Common myeloid progenitor, CD34-positive (primary cell): ENCODE measurements at regions of chr17 and their contacts with region 1.

Region 1: DNA sequence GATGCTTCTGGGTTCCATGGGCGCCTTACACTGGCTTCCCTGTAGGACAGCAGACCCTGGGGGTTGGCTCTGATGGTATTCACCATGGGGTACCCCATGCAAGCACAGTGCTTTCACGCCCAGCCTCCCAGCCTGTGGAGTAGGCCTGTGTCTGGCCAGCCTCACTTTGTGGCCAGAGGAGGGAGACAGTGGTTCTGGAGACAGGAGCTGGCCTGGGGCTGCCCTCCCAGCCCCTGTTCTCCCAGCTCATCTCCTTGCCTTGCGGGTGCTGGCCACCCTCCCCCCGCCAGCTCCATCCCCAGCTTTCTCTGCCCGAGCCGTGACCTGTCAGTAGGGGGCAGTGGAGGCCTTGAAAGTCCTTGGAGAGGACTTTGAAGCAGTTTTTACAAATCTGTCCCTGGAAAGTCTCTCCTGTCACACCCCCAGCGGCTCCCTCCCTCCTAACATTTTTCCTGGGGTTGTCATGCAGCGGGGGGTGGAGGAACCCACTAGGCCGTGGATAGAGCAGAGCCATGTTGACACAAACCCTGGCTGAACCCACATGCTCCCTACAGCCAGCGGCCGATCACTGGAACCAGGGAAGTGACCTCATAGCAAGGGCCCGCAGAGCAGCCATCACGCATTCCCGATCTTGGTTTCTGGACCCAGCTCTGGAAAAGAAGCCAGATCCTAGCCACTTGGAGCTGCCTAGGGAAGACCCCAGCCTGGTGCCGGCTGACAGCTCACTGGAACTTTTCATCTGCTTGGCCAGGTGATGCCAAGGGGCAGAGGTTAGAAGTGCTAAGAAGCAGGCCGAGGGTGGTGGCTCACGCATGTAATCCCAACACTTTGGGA is 289.4 kb downstream of the SEC14L1 start:
- DNase-seq: peak; percentile 65 to 73 (median 68)
- H3K4me3 ChIP-seq: peak overlapping the region in 1 of 7 experiments; percentile 6
- H3K27ac ChIP-seq: no peak overlapping the region
- H3K4me1 ChIP-seq: peaks cover 4 to 99% (median 77%) of the 10 kb centered on the region in 4 experiments
- H3K27me3 ChIP-seq: no peaks in the 10 kb centered on the region

Region 2: DNA sequence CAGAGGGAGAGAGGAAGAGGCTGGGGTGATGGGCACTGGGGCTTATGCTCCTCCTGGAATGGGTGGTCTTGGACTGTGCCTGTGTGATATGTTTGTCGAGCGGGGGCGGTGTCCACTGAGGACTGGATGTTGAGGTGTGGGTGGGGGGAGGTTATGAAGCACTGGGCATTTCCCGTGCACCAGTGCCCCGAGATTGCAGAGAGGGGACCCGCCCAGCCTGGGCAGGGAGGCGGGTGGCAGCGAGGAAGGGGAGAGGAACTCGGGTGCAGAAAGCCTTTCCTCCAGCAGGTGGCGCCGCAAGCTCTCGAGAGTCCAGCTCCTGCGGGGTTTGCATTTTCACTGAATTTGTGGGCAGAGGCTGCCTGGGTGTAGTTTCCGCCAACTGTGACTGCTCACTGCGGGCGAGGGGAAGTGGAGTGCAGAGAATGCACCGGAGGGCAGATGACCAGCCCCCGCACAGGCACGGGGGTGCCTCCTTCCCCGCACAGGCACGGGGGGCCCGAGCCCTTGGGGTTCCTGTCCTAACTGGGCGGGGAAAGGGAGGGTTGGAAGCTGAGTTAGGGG is 98.8 kb before region 1 on chr17:
- CTCF ChIA-PET with region 1: interaction called, 36 read pairs
- POLR2A ChIA-PET with region 1: no interaction called
- DNase-seq: peak; percentile 88 to 95 (median 94)
- H3K4me3 ChIP-seq: peak overlapping the region in 5 of 7 experiments; percentile 27 to 69 (median 54)
- H3K27ac ChIP-seq: no peak overlapping the region
- H3K4me1 ChIP-seq: peaks cover 3 to 57% (median 23%) of the 10 kb centered on the region in 4 experiments
- H3K27me3 ChIP-seq: no peaks in the 10 kb centered on the region

Region 3: DNA sequence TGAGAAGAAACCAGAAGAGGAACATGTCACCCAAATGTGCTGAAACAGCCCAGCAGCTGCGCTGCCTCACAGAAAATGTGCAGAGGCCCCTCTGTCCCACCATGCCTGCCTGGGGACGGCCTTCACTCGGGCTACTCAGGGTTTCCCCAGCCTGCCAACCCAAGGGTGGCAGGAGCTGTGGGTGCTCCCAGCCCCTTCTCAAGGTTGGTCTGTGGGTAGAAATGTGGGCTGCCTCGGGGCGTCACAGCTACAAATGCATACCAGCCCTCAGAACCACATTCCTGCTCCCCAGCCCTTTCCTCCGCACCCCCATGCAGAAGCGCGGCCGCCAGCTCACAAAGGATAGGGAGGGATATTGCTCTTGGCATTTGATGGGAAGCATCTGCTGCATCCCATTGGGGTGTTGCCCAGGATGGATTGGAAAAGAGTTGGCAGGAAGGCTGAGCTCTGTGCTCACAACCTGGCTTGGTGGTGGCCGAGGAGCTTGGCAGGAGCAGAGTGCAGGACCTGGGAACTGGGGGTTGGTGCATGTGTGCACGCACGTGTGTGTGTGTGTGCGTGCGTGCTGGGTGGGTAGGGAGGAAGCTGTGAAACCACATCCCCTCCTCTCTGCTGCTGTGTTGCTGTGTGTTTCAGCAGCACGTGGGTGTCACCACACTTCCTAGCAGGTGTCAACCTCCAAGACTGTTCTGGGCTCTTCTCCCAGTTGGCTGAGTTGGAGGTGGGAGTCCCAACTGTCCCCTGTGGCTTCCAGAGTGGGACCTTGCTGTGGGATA is 15.0 kb after region 1 on chr17:
- CTCF ChIA-PET with region 1: interaction called, 46 read pairs
- POLR2A ChIA-PET with region 1: interaction called, 6 read pairs
- DNase-seq: peak; percentile 96 to 99 (median 98)
- H3K4me3 ChIP-seq: peak overlapping the region in 5 of 7 experiments; percentile 9 to 49 (median 48)
- H3K27ac ChIP-seq: peak overlapping the region; percentile 46 to 84
- H3K4me1 ChIP-seq: peaks cover 30 to 87% (median 78%) of the 10 kb centered on the region in 4 experiments
- H3K27me3 ChIP-seq: no peaks in the 10 kb centered on the region

Region 4: DNA sequence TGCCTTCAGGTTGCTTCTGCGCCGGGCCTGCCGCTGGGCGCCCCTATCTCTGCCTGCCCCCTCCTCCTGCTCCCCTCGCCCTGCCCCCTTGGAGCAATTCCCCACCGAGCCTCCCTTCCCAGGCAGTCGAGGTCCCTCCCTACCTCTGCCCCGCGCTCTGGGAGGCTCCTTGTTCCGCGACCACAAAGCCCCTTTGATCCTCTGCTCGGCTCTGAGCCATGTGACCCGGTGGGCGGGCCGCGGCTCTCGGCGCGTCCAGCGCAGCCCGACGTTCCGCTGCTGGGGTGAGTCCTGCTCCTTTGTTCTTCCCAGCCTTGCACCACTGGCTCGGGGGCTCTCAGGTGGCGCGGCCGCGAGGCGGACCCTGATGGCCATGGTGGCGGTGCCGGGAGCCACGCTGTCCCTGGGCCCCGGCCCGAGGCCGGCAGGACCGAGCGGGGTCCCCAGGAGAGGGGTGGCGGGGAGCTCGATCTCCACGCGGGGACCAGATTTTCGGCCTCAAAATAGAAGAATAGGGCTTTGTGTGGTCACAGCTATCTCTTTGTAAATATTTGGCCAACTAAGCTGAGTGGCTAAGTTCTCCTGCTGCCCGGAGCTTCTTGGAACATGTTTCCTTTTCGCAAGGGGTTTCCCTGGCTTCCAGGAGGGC is 21.2 kb after region 1 on chr17:
- CTCF ChIA-PET with region 1: interaction called, 10 read pairs
- POLR2A ChIA-PET with region 1: no interaction called
- DNase-seq: peak in 2 of 3 donors; percentile 57 to 69
- H3K4me3 ChIP-seq: peak overlapping the region; percentile 59 to 83 (median 75)
- H3K27ac ChIP-seq: peak overlapping the region in 1 of 2 experiments; percentile 68
- H3K4me1 ChIP-seq: peaks cover 10 to 84% (median 77%) of the 10 kb centered on the region in 4 experiments
- H3K27me3 ChIP-seq: no peaks in the 10 kb centered on the region

Region 5: DNA sequence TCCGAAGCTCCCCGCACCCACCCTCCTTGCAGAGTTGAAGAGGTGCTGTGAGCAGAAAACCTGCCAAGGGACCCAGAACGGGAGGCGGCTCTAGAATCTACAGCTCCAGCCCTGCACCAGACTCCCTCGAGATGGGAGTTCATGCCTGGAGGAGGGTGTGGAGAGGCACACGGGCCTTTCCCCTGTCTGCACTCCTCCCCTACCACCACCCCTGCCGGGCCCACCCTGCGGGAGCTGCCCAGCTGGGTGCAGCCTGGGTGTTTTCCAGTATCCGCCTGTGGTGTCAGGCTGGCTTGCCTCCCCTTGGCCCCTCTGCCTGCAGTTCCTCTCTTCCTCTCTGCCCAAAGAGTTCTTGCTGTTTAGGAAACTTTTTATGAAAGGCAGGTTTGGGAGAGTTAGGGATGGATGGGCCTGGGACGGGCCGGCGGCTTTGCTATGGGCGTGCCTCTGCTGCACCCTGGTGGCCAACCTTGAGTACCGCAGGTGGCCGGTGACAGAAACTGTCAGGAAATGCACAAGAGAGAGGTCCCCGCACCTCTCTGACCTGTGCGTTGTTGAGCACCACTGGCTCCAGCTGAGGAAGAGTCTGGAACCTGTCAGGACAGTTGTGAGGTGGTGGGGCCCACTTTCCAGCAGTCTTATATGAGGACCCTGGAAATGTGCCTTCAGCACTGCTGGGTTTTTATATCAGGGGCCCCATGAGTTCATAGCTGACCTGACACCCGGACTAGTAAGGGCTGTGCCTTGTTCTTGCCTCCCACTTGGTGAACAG is 64.7 kb after region 1 on chr17:
- CTCF ChIA-PET with region 1: interaction called, 77 read pairs
- POLR2A ChIA-PET with region 1: no interaction called
- DNase-seq: peak; percentile 56 to 73 (median 60)
- H3K4me3 ChIP-seq: no peak overlapping the region
- H3K27ac ChIP-seq: no peak overlapping the region
- H3K4me1 ChIP-seq: peaks cover 0 to 10% (median under 1%) of the 10 kb centered on the region in 4 experiments
- H3K27me3 ChIP-seq: no peaks in the 10 kb centered on the region